ENCODE measurements at regions of chr10 and their contacts with region 1.

Region 1: DNA sequence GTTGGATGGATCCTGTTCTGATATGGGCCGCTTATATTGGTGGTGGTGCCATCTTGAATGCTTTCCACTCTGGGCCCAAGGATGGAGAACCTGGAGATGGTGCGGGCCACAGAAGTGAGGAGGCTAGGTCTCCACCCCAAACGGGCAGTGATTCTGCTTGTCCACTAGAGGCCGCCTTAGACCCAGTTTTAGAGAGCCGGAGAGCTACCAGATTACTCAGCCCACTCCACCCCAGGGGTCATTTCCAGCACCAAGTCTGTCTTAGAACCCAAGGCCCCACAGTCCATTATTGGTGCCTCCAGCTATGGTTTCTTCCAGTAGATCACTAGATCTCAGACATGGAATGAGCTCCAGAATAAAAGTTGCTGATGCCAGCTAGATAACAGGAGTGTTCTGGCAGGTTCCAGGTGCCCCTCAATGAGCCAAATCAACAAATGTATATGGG is 11.8 kb upstream of the CAMK2G start:
- DNase-seq: peak; percentile 80 to 85
- H3K4me3 ChIP-seq: no peak overlapping the region
- H3K4me3 Mint-ChIP-seq: no peak overlapping the region
- H3K27ac Mint-ChIP-seq: no peak overlapping the region
- H3K4me1 ChIP-seq: peaks cover 29% of the 10 kb centered on the region
- H3K4me1 Mint-ChIP-seq: peaks cover 16% of the 10 kb centered on the region
- H3K27me3 ChIP-seq: no peaks in the 10 kb centered on the region
- H3K27me3 Mint-ChIP-seq: no peaks in the 10 kb centered on the region
- CTCF ChIP-seq: peak; percentile 80 to 91

Region 2: GRCh38 chr10:73743905-73744663 is 142.0 kb before region 1 on chr10 and contains the start of gene SEC24C:
- CTCF ChIA-PET with region 1: no interaction called
- POLR2A ChIA-PET with region 1: no interaction called
- intact Hi-C with region 1: no loop called
- DNase-seq: peak; percentile 97
- H3K4me3 ChIP-seq: peak within 1 kb of the TSS; percentile 59
- H3K4me3 Mint-ChIP-seq: peak within 1 kb of the TSS; percentile 97
- H3K27ac Mint-ChIP-seq: peak within 1 kb of the TSS; percentile 99
- H3K4me1 ChIP-seq: peaks cover 6% of the 10 kb centered on the region; the same call in 1 of the 2 replicates
- H3K4me1 Mint-ChIP-seq: peaks cover 6% of the 10 kb centered on the region
- H3K27me3 ChIP-seq: no peaks in the 10 kb centered on the region
- H3K27me3 Mint-ChIP-seq: no peaks in the 10 kb centered on the region
- CTCF ChIP-seq: no peak
- total RNA-seq, gene SEC24C: 91.0 and 91.2 TPM in 2 replicates

Region 3: GRCh38 chr10:73940634-73941221 is 54.6 kb after region 1 on chr10:
- CTCF ChIA-PET with region 1: interaction called, 54 read pairs
- POLR2A ChIA-PET with region 1: interaction called, 5 read pairs
- intact Hi-C with region 1: loop called (anchors 1 kb)
- DNase-seq: peak; percentile 77 to 91
- H3K4me3 ChIP-seq: peak overlapping the region; percentile 24; the same call in 1 of the 2 replicates
- H3K4me3 Mint-ChIP-seq: peak overlapping the region; percentile 47
- H3K27ac Mint-ChIP-seq: no peak overlapping the region
- H3K4me1 ChIP-seq: peaks cover 8% of the 10 kb centered on the region
- H3K4me1 Mint-ChIP-seq: no peaks in the 10 kb centered on the region
- H3K27me3 ChIP-seq: no peaks in the 10 kb centered on the region
- H3K27me3 Mint-ChIP-seq: no peaks in the 10 kb centered on the region
- CTCF ChIP-seq: peak; percentile 84 to 94

Region 4: DNA sequence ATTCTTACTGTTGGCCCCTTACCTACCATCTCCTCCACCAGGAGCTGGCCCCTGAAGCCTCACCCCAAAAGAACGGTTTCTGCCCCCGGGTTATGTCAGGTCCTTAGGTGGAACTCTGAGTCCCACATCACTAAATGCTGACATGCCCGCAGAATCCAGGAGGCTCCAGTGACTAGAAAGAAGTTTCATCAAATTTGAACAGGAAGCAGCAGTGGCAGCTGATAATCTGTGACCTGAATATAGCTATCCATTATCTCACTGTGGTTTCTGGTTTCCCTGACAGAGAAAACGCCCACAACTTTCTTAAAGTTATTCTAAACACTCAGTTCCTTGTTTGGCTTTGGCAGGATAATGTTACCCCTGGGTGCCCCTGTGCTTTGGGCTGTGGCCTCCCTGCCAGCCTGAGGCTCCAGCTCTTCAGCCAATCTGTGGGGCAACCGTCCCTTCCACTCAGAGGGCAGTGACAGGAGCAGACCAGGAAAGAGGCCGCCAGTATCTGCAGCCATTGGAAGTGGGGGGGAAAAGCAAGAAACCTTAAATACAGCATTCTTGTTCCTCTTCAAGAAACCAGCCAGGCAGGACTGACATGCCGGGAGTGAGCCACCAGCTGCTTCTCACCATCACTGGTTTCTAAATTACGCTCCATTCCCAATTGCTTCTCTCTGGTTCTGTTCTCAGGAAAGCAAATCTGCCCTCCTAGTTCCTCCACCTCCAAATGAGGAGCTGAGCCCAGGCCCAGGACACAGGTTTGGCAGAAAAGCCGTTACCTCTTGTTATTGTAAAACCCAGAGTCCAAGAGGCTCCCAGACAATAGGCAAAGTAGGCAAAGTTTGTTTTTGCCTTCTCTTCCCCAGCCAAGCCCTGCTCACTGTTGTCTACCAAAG is 70.6 kb after region 1 on chr10:
- CTCF ChIA-PET with region 1: interaction called, 13 read pairs
- POLR2A ChIA-PET with region 1: no interaction called
- intact Hi-C with region 1: loop called (anchors 1 kb)
- DNase-seq: no peak
- H3K4me3 ChIP-seq: no peak overlapping the region
- H3K4me3 Mint-ChIP-seq: no peak overlapping the region
- H3K27ac Mint-ChIP-seq: no peak overlapping the region
- H3K4me1 ChIP-seq: no peaks in the 10 kb centered on the region; the same call in 1 of the 2 replicates
- H3K4me1 Mint-ChIP-seq: no peaks in the 10 kb centered on the region
- H3K27me3 ChIP-seq: no peaks in the 10 kb centered on the region
- H3K27me3 Mint-ChIP-seq: no peaks in the 10 kb centered on the region
- CTCF ChIP-seq: no peak

Region 5: GRCh38 chr10:74058658-74059057 is 172.6 kb after region 1 on chr10:
- CTCF ChIA-PET with region 1: interaction called, 13 read pairs
- POLR2A ChIA-PET with region 1: no interaction called
- intact Hi-C with region 1: loop called (anchors 1 kb)
- DNase-seq: peak; percentile 67 to 74
- H3K4me3 ChIP-seq: no peak overlapping the region
- H3K4me3 Mint-ChIP-seq: peak overlapping the region; percentile 62
- H3K27ac Mint-ChIP-seq: peak overlapping the region; percentile 70
- H3K4me1 ChIP-seq: peaks cover 49% of the 10 kb centered on the region
- H3K4me1 Mint-ChIP-seq: peaks cover 26% of the 10 kb centered on the region
- H3K27me3 ChIP-seq: no peaks in the 10 kb centered on the region
- H3K27me3 Mint-ChIP-seq: no peaks in the 10 kb centered on the region
- CTCF ChIP-seq: peak in 1 of 2 experiments; percentile 57

Region 6: DNA sequence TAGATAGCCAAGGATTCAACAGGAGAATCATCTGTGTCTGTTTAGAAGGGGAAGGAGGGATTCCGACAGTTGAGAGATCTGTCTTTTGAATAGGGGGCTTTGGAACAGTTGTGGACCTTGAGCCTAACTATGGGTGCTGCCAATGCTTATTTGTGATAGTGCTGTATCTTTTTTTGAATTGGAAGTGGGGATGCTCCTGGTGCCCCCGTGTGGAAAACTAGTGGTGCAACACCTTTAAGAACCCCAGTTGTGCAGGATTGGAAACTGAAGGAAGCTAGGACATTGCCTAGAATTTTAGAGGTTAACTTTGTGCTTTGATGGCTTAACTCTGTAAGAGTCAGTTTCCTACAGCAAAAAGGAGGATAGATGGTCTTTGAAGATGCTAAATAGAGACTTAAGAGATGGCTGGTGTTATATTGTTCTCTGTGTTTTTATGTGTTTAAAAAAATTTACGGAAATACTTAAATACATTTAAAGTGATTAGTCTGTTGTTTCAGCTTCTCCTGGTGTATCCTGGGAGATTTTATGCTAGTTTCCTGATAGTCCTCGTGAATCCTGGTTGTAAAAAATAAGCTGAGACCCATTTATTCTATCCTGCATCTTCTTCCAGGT is 195.2 kb after region 1 on chr10:
- CTCF ChIA-PET with region 1: interaction called, 14 read pairs
- POLR2A ChIA-PET with region 1: no interaction called
- intact Hi-C with region 1: loop called (anchors 1 kb)
- DNase-seq: peak; percentile 53 to 58
- H3K4me3 ChIP-seq: no peak overlapping the region
- H3K4me3 Mint-ChIP-seq: no peak overlapping the region
- H3K27ac Mint-ChIP-seq: no peak overlapping the region
- H3K4me1 ChIP-seq: peaks cover 19% of the 10 kb centered on the region
- H3K4me1 Mint-ChIP-seq: peaks cover 6% of the 10 kb centered on the region
- H3K27me3 ChIP-seq: no peaks in the 10 kb centered on the region
- H3K27me3 Mint-ChIP-seq: no peaks in the 10 kb centered on the region
- CTCF ChIP-seq: peak; percentile 76 to 77

Region 7: GRCh38 chr10:74103560-74104248 is 217.6 kb after region 1 on chr10:
- CTCF ChIA-PET with region 1: interaction called, 12 read pairs
- POLR2A ChIA-PET with region 1: no interaction called
- intact Hi-C with region 1: loop called (anchors 1 kb)
- DNase-seq: peak in 1 of 2 experiments; percentile 32
- H3K4me3 ChIP-seq: no peak overlapping the region
- H3K4me3 Mint-ChIP-seq: no peak overlapping the region
- H3K27ac Mint-ChIP-seq: no peak overlapping the region
- H3K4me1 ChIP-seq: no peaks in the 10 kb centered on the region
- H3K4me1 Mint-ChIP-seq: no peaks in the 10 kb centered on the region
- H3K27me3 ChIP-seq: no peaks in the 10 kb centered on the region
- H3K27me3 Mint-ChIP-seq: no peaks in the 10 kb centered on the region
- CTCF ChIP-seq: peak; percentile 39 to 55

Measured in Caco-2 (cell line).